CD8-positive, alpha-beta T cell (primary cell): ENCODE measurements at regions of chrX and their contacts with region 1.

Region 1: GRCh38 chrX:9312922-9313867 is 151.7 kb upstream of the TBL1X start:
- DNase-seq: peak; percentile 43 to 87 (median 72)
- ATAC-seq: peak; percentile 88
- H3K4me3 ChIP-seq: no peak overlapping the region
- H3K4me3 Mint-ChIP-seq: no peak overlapping the region
- H3K27ac ChIP-seq: no peak overlapping the region
- H3K27ac Mint-ChIP-seq: no peak overlapping the region
- H3K4me1 ChIP-seq: no peaks in the 10 kb centered on the region
- H3K4me1 Mint-ChIP-seq: peaks cover 12% of the 10 kb centered on the region
- H3K27me3 ChIP-seq: no peaks in the 10 kb centered on the region
- H3K27me3 Mint-ChIP-seq: no peaks in the 10 kb centered on the region
- CTCF ChIP-seq: peak; percentile 57

Region 2: DNA sequence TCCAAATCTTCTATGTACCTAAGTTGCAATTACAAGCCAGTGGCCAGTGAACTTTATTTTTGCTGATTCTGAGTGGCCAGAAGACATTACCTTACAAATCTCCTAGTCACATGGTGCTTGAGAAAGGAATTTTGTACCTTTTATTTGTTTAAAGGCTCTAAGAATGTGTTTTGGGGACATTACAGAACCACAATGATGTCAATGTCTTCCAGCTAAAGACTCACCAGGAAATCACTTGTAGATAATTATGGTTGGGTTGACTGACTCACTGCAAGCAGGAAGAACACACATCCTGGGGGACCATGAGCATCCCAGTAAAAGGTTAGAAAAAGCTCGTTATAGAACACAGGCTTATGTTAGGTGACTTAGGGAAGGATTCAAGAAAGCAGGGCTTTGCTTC is 159.9 kb before region 1 on chrX:
- CTCF ChIA-PET with region 1: interaction called, 3 read pairs
- POLR2A ChIA-PET with region 1: no interaction called
- intact Hi-C with region 1: loop called in 1 of 2 experiments (anchors 10 kb)
- DNase-seq: peak in 1 of 9 experiments; percentile 9
- ATAC-seq: no peak
- H3K4me3 ChIP-seq: no peak overlapping the region
- H3K4me3 Mint-ChIP-seq: no peak overlapping the region
- H3K27ac ChIP-seq: no peak overlapping the region
- H3K27ac Mint-ChIP-seq: no peak overlapping the region
- H3K4me1 ChIP-seq: no peaks in the 10 kb centered on the region
- H3K4me1 Mint-ChIP-seq: peaks cover 6% of the 10 kb centered on the region
- H3K27me3 ChIP-seq: no peaks in the 10 kb centered on the region
- H3K27me3 Mint-ChIP-seq: no peaks in the 10 kb centered on the region
- CTCF ChIP-seq: no peak

Region 3: DNA sequence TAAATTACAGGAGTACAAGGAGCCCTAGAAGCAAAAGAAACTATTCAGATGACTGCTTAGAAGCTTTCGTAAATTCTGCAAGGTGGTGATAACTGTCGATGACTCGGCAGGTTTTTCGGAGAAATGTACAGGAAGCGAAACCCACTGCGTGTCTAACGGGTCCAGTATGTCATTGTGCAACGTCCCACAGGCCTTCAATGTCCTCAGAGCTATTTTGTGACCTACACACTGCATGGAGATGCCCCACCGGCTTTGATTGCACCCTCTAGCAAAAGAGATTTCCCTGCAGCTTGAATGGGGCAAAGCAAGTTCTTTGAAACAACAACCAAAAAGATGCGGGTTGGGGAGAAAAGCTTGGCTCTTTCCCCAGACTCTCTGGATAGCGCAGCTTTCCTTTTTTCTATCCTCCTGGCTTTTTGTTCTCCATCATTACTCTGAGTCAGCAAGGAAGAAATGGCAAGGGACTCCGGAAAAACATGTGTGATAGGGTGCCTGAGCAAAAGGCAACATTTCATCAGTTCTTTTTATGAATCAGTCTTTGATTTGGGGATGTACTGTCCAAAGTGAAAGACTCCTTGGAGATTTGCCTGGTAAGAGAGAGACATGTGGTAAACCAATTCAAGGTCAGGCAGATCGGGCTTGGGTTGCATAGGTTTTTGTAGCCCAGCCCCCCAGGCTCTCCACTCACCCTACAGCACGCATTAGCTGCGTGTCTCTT is 39.7 kb after region 1 on chrX:
- CTCF ChIA-PET with region 1: no interaction called
- POLR2A ChIA-PET with region 1: no interaction called
- intact Hi-C with region 1: loop called in 1 of 2 experiments (anchors 5 kb)
- DNase-seq: peak in 5 of 9 experiments; percentile 27 to 70 (median 53)
- ATAC-seq: peak; percentile 9
- H3K4me3 ChIP-seq: peak overlapping the region; percentile 19 to 20
- H3K4me3 Mint-ChIP-seq: peak overlapping the region; percentile 74
- H3K27ac ChIP-seq: peak overlapping the region; percentile 44 to 47
- H3K27ac Mint-ChIP-seq: peak overlapping the region; percentile 80
- H3K4me1 ChIP-seq: peaks cover 32% of the 10 kb centered on the region
- H3K4me1 Mint-ChIP-seq: peaks cover 30% of the 10 kb centered on the region
- H3K27me3 ChIP-seq: no peaks in the 10 kb centered on the region
- H3K27me3 Mint-ChIP-seq: no peaks in the 10 kb centered on the region
- CTCF ChIP-seq: no peak